BJ (cell line): ENCODE measurements at regions of chr2 and their contacts with region 1.

Region 1: GRCh38 chr2:195587966-195588365 is 69.1 kb upstream of the SLC39A10 start:
- DNase-seq: no peak
- H3K4me3 ChIP-seq: no peak overlapping the region
- H3K27me3 ChIP-seq: no peaks in the 10 kb centered on the region
- CTCF ChIP-seq: no peak

Region 2: GRCh38 chr2:195561203-195562032 is 26.5 kb before region 1 on chr2:
- CTCF ChIA-PET with region 1: no interaction called
- POLR2A ChIA-PET with region 1: interaction called, 12 read pairs
- DNase-seq: peak; percentile 94
- H3K4me3 ChIP-seq: no peak overlapping the region
- H3K27me3 ChIP-seq: no peaks in the 10 kb centered on the region
- CTCF ChIP-seq: no peak

Region 3: DNA sequence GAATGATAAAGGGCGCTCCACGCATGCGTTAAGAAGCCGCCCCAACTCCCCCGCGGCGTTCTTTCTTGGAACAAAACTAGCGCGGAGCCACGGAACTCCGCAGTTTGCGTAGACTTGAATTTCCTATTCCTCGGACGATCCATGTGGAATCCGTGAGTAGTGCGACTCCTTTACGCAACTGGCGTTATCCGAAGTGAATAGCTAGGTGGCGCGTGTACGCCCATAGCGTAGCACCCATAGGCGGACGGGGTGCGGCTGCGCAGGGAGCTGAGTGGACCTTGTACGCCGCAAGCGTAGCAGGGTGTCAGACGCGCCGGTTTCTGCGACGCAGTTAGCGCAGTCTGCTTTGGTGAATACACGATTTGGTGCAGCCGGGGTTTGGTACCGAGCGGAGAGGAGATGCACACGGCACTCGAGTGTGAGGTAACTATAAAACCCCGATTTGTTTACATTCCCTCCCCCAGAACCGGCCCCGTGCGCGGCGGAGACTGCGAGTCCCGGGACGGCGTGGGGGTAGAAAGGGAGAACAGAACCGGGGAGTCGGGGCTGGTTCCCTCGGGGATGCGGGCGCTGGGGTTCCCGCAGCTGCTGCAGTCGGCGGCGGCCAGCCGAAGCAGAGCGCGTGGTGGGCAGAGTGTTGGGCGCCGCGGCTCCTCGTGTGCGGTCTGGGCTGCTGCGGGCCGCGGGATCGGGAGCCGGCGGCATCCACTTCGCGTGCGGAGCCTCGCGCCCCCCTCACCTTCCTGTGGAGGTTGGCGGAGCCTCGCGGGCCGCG is 69.1 kb after region 1 on chr2 and contains the start of gene SLC39A10:
- CTCF ChIA-PET with region 1: no interaction called
- POLR2A ChIA-PET with region 1: no interaction called
- DNase-seq: peak; percentile 92
- H3K4me3 ChIP-seq: peak within 1 kb of the TSS; percentile 79
- H3K27me3 ChIP-seq: no peaks in the 10 kb centered on the region
- CTCF ChIP-seq: no peak
- polyA plus RNA-seq, gene SLC39A10: 13.7 and 25.7 TPM in 2 replicates